Left colon (tissue), 2 donors: ENCODE measurements at regions of chr4 and their contacts with region 1.

Region 1: GRCh38 chr4:20544645-20545044 is 155.6 kb upstream of the PACRGL start:
- DNase-seq: no peak
- ATAC-seq: peak; percentile 73

Region 2: DNA sequence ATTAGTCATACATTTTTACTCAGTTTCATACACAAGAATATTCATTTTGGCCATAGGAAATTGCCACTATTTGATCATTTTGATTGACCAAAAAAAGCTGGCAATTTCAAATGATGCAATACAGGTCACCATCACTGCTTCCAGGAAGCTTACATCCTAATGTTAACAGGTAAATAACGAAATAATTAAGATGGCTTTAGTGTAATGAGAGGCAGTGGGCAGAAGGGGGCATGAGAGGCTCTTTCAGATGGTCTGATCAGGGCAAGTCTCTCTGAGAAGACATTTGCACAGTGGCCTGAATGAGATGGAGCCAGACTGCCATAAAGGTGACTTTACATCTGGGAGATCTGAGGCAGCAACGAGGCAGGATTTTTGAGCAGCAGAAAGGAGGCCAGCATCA is 122.2 kb before region 1 on chr4:
- intact Hi-C with region 1: loop called in 1 of 2 experiments (anchors 5 kb)
- DNase-seq: peak; percentile 35 to 45
- ATAC-seq: peak; percentile 90

Region 3: GRCh38 chr4:20684852-20685763 is 140.5 kb after region 1 on chr4:
- intact Hi-C with region 1: loop called in 1 of 2 experiments (anchors 10 kb)
- DNase-seq: no peak
- ATAC-seq: no peak

Region 4: DNA sequence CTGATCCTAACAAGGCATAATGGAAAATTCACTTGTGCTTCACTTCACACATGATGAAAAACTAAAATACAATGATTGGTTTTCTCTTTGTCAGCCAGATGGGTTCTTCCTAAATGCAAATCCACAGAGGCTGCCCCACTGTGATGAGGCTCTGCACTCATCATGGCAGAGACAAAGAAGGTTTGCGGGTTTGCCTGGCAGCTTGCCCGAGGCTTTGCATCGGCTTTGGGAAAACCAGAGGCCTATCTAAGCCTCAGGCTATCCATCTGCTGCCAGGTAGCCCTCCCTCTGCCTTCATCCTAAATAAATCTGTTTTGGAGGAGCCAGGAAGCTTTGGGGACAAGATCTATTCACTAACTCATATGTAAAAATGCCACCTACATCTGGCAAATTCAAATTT is 399.8 kb after region 1 on chr4:
- intact Hi-C with region 1: no loop called
- DNase-seq: no peak
- ATAC-seq: no peak